ENCODE measurements at regions of chr12 and their contacts with region 1.

Region 1: GRCh38 chr12:12474931-12475795 is 87.5 kb downstream of the DUSP16 start:
- DNase-seq: peak; percentile 73
- ATAC-seq: peak; percentile 88
- H3K4me3 Mint-ChIP-seq: peak overlapping the region; percentile 58
- H3K27ac Mint-ChIP-seq: peak overlapping the region; percentile 92
- H3K4me1 Mint-ChIP-seq: peaks cover 67% of the 10 kb centered on the region
- H3K27me3 Mint-ChIP-seq: no peaks in the 10 kb centered on the region

Region 2: DNA sequence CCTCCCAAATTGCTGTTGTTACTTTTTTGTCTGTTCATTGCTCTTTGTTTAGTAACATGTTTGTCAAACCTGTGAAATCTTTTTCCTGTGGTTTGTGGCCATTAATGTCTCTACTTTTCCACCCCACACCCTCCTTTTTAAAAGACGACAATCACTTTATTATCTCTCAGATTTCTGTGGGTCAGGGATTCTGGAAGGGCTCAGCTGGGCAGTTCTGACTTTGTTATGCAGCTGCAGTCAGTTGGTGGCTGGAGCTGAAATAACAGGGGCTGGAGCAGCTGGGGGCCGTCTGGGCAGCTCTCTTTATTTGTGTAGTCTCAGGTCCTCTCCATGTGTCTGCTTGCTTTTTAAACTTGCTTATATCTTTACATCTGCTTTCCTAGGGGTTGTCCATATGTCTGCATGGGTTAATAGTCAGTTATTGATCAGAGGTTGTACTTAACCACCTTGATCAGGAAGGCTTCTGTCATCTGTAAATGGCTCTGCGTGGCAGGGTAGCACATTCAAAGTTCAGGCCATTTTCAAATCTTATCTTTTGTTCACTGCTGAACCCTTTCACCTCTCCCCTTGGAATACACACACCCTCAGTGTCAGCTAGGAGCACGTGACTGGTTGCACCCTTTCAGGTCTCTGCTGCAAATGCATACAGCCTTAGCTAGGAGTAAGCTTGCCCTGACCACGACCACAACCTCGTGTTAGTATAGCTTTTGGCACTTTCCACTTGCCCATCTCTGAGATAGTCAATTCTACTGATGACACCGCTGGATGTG is 90.4 kb before region 1 on chr12:
- CTCF ChIA-PET with region 1: interaction called, 124 read pairs
- POLR2A ChIA-PET with region 1: interaction called, 13 read pairs
- DNase-seq: peak; percentile 84
- ATAC-seq: peak; percentile 91
- H3K4me3 Mint-ChIP-seq: peak overlapping the region; percentile 38
- H3K27ac Mint-ChIP-seq: peak overlapping the region; percentile 87
- H3K4me1 Mint-ChIP-seq: peaks cover 55% of the 10 kb centered on the region
- H3K27me3 Mint-ChIP-seq: no peaks in the 10 kb centered on the region

Region 3: GRCh38 chr12:12456637-12457036 is 18.5 kb before region 1 on chr12:
- CTCF ChIA-PET with region 1: interaction called, 12 read pairs
- POLR2A ChIA-PET with region 1: interaction called, 9 read pairs
- DNase-seq: no peak
- ATAC-seq: peak; percentile 33
- H3K4me3 Mint-ChIP-seq: no peak overlapping the region
- H3K27ac Mint-ChIP-seq: peak overlapping the region; percentile 58
- H3K4me1 Mint-ChIP-seq: peaks cover 24% of the 10 kb centered on the region
- H3K27me3 Mint-ChIP-seq: no peaks in the 10 kb centered on the region

Region 4: DNA sequence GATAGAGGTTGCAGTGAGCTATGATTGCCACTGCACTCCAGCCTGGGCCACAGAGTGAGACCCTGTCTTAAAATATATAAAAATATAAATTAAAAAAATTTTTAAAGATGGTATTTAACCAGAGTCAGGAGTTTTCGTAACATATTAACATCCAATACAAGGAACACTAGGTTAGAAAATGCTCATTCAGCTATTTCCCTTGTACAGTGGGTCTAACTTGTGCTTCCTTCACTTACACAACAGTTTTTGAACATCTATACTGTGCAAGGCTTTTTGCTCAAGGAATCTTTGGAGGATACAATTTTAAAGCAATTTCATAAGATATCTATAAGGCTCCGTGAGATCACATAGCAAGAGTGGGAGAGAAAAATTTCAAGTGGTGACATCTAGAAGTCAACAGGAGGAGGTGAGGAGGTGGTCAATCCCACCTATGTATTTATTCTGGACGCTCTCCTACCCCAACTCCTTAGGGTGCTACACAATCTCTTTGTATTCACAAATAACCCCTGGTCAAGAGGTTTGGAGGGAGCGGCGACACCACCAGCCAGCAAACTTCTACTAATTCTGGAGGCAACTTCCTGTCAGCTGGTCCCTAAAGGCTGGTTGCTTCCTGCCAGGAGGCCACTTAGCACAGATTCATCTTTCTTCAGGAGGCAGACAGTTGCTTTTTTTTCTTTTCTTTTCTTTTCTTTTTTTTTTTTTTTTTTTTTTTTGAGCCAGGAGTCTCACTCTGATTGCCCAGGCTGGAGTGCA is 65.3 kb after region 1 on chr12:
- CTCF ChIA-PET with region 1: no interaction called
- POLR2A ChIA-PET with region 1: no interaction called
- DNase-seq: peak; percentile 33
- ATAC-seq: no peak
- H3K4me3 Mint-ChIP-seq: no peak overlapping the region
- H3K27ac Mint-ChIP-seq: peak overlapping the region; percentile 69
- H3K4me1 Mint-ChIP-seq: peaks cover 25% of the 10 kb centered on the region
- H3K27me3 Mint-ChIP-seq: no peaks in the 10 kb centered on the region

Region 5: DNA sequence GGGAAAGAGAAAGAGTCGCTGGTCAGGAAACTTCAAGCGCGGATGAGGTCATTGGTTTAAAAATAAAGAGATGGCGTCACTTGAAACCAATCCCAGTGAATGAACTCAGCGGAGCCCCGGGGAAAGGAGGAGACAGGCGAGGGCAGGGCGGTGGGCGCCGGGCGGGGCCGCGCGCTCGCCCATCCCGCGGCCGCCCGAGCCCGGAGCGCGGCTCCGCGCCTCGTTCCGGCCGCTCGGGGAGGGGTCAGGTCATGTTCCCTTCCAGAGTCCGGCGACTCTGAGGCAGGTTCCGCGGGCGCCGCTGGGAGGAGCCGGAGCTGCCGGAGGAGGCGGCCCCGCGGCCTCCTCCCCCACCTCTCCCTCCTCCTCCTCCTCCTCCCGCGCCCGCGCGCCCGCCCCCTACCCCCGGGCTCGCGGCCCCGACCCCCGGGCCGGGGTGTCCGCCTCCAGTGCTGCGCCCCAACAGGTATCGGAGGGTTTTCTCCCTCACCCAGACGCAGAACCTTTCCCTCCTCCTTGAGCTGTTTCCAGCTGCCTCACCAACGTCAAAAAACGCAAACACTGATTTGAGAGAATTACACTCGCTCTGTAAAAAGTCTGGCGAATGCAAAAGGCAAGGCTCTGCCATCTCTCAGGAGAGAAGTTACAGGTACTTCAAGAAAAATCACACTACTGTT is 87.6 kb after region 1 on chr12 and contains the start of gene DUSP16:
- CTCF ChIA-PET with region 1: interaction called, 15 read pairs
- POLR2A ChIA-PET with region 1: interaction called, 13 read pairs
- DNase-seq: peak; percentile 88
- ATAC-seq: peak; percentile 88
- H3K4me3 Mint-ChIP-seq: peak within 1 kb of the TSS; percentile 83
- H3K27ac Mint-ChIP-seq: peak within 1 kb of the TSS; percentile 91
- H3K4me1 Mint-ChIP-seq: peaks cover 35% of the 10 kb centered on the region
- H3K27me3 Mint-ChIP-seq: peaks cover 5% of the 10 kb centered on the region
- total RNA-seq, gene DUSP16: 17.4 to 19.0 TPM

Measured in activated CD8-positive, alpha-beta T cell treated with anti-CD3 and anti-CD28 coated beads, Interleukin-2, amount 10 ng/mL, durations not matched to agents 7 days and 5 days (primary cell).